Heart right ventricle (tissue), 16 donors: ENCODE measurements at regions of chr20 and their contacts with region 1.

Region 1: DNA sequence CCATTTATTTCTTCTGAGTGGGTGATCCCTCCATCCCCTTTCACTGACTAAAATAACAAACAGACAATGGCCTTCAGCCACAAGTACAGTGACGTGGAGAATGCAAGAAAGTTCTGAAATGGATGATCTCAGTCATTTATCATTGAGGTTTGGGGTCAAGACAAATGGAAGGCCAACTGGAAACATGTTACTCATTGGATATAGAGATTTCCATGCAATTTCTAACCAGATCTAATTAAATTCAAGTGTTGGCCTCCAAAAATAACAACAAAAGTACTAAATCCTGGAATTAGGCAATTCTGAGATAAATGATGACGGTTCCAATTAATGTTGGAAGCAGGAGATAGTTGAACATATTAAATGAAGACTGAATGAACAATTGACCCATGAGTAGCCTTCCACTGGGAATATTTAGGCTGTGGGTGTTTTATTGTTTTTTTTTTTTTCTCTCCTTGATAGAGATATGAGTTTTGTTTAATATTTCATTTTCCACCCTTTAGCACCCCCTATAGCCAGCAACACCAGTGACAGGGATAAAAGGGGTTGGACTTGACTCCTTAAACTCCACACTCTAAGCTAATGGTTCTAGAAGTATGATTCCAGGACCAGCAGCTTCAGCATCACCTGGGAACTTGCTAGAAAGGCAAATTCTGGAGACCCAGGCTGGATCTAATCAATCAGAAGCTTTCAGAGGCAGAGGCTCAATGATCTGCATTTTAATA is 112.8 kb downstream of the BCAS1 start:
- DNase-seq: no peak
- ATAC-seq: peak in 6 of 8 donors; percentile 13 to 42 (median 36)
- H3K4me3 ChIP-seq: no peak overlapping the region
- H3K27ac ChIP-seq: peak overlapping the region in 1 of 10 donors; percentile 56
- H3K4me1 ChIP-seq: peaks cover 0 to 11% (median 3%) of the 10 kb centered on the region in 9 donors
- H3K27me3 ChIP-seq: peaks cover 0 to 3% (median 0%) of the 10 kb centered on the region in 7 donors
- CTCF ChIP-seq: peak in 2 of 9 donors; percentile 15 to 25

Region 2: DNA sequence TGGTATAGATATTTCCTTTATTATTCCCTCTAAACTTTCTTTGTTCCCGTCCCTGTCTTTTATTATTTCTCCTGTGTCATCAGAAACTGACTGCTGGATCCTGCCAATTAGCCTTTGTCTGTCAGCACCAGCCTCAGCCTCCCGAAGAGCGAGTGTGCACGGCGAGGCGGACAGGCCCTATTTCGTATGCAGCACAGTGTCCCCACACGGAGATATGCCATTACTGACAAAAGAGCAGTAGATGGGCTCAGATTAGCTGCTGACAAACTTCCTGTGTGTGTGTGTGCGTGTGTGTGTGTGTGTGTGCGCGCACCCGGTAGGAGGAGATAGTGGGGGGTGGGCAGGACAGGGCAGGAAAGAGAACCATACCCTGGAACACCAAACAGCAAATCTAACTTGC is 1666.5 kb before region 1 on chr20:
- intact Hi-C with region 1: loop called in 1 of 10 experiments (anchors 10 kb)
- DNase-seq: no peak
- ATAC-seq: no peak
- H3K4me3 ChIP-seq: no peak overlapping the region
- H3K27ac ChIP-seq: no peak overlapping the region
- H3K4me1 ChIP-seq: no peaks in the 10 kb centered on the region
- H3K27me3 ChIP-seq: peaks cover 0 to 2% (median 0%) of the 10 kb centered on the region in 7 donors
- CTCF ChIP-seq: no peak

Region 3: DNA sequence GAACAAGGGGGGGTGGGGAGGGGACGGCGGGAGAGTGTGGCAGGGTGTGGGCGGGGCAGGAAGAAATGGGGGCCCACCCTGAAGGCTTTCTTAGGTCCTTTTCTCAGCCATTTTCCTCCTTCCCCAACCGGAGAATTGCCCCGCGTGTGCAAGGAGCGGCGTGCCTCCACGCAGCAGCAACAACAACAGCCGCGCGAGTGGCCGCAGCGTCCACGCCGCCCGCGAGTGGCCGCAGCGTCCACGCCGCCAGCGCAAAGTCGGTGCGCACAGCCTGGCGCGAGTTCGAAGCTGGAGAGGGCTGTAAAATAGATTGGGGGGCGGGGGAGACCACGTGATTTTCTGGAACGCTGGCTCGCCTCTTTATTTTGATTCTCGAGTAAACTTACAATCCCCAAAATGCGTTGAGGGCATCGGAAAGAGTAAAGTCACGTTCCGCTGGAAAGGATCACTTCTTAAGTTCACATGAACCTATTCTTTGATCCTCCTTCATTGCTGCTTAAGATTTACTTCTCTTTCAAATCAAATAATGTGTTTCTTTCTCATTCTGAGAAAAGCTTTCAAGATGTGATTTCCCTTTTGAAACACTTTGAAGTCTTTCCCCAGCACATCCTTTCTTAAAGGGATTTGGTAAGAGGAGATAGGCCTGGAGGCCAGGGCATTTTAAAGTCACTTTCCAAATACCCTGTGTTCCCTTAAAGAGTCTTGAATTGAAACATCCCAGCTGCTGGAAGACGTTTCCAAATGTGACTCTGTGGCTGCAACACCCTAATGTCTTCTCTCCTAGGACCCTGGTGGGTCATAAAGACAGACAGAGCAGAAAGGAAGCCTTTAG is 297.3 kb before region 1 on chr20:
- intact Hi-C with region 1: no loop called
- DNase-seq: peak; percentile 22 to 36
- ATAC-seq: peak in 7 of 8 donors; percentile 42 to 81 (median 62)
- H3K4me3 ChIP-seq: peak overlapping the region in 9 of 10 donors; percentile 28 to 56 (median 54)
- H3K27ac ChIP-seq: peak overlapping the region; percentile 23 to 85 (median 58)
- H3K4me1 ChIP-seq: peaks cover 0 to 64% (median 28%) of the 10 kb centered on the region in 9 donors
- H3K27me3 ChIP-seq: no peaks in the 10 kb centered on the region
- CTCF ChIP-seq: no peak

Region 4: DNA sequence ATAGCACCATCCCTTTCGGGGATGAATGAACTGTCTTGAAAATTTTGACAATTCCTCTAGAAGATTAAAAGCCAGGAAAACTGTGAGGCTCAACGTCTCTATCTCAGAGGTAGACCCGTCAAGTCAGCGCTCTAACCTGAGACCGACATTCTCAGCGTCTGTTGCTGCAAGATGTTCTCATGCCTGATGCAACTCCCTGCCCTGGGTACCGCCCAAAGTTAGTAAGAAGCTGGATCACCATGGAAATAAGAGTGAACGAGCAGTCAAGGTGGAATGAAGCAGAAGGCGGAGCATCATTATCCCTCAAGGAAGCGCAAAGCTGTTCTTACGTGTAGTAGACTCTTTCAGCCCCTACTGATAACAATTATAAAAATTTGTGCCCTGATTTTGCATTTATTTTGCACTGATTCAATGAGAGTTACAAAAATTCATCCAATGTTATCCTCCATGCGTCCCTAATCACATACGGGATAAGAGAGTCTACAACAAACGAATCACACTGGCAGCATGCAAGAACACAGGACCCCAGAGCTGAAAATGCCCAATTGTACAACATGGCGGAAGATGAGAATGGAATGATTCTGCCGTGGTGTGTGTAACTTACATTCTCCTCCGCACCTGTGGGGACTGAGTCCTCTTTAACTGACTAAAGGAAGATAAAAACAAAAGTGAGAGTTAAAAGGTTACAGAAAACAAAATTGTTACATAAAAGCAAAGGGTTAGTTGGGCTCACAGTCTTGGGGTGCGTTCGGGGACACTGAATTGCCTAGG is 17.4 kb after region 1 on chr20:
- intact Hi-C with region 1: no loop called
- DNase-seq: no peak
- ATAC-seq: no peak
- H3K4me3 ChIP-seq: no peak overlapping the region
- H3K27ac ChIP-seq: no peak overlapping the region
- H3K4me1 ChIP-seq: peaks cover 0 to 2% (median 0%) of the 10 kb centered on the region in 9 donors
- H3K27me3 ChIP-seq: no peaks in the 10 kb centered on the region
- CTCF ChIP-seq: no peak